ENCODE measurements at regions of chr1 and their contacts with region 1.

Region 1: GRCh38 chr1:167059045-167059808 is 30.9 kb downstream of the GPA33 start:
- DNase-seq: peak; percentile 85
- ATAC-seq: peak; percentile 55
- H3K4me3 Mint-ChIP-seq: no peak overlapping the region
- H3K27ac Mint-ChIP-seq: peak overlapping the region; percentile 61
- H3K4me1 Mint-ChIP-seq: peaks cover 7% of the 10 kb centered on the region
- H3K27me3 Mint-ChIP-seq: no peaks in the 10 kb centered on the region

Region 2: GRCh38 chr1:165928075-165928731 is 1131.0 kb before region 1 on chr1:
- CTCF ChIA-PET with region 1: no interaction called
- POLR2A ChIA-PET with region 1: no interaction called
- intact Hi-C with region 1: loop called in 1 of 2 experiments (anchors 2 kb)
- DNase-seq: peak; percentile 73
- ATAC-seq: peak; percentile 84
- H3K4me3 Mint-ChIP-seq: no peak overlapping the region
- H3K27ac Mint-ChIP-seq: no peak overlapping the region
- H3K4me1 Mint-ChIP-seq: no peaks in the 10 kb centered on the region
- H3K27me3 Mint-ChIP-seq: peaks cover 8% of the 10 kb centered on the region

Region 3: DNA sequence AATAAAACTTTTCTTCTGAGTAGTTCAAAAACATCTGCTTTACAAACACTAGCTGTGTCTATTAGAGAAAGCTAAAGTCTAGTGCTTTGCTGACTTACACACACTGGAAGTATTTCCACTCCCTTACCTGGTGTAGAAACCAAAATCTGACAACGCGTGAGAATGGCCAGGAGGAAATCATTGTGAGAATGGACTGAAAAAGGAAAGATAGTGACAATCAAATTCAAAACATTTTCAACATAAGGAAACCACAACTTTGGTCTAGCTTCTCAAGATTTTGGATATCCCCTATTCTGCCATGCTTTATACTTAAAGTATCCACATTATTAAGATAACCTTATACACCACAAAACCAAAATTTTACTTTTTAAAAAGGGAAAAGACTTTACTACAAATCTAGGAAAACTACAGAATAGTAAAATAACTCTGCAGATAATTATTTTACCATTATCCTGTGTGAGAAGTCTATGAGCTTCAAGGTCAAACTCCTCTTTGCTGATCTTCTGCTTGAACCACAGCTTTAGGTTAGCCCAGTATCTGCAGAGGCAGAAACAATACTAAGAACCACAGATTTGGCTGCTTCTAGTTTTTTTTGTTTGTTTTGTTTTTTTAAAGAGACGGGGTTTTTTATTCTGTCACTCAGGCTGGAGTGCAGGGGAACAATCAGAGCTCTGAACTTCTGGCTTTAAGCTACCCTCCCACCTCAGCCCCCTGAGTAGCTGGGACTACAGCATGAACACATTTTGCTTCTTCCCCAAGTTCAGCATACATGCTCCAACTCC is 189.7 kb before region 1 on chr1:
- CTCF ChIA-PET with region 1: interaction called, 42 read pairs
- POLR2A ChIA-PET with region 1: no interaction called
- intact Hi-C with region 1: no loop called
- DNase-seq: no peak
- ATAC-seq: peak; percentile 44
- H3K4me3 Mint-ChIP-seq: no peak overlapping the region
- H3K27ac Mint-ChIP-seq: peak overlapping the region; percentile 70
- H3K4me1 Mint-ChIP-seq: peaks cover 48% of the 10 kb centered on the region
- H3K27me3 Mint-ChIP-seq: no peaks in the 10 kb centered on the region

Region 4: DNA sequence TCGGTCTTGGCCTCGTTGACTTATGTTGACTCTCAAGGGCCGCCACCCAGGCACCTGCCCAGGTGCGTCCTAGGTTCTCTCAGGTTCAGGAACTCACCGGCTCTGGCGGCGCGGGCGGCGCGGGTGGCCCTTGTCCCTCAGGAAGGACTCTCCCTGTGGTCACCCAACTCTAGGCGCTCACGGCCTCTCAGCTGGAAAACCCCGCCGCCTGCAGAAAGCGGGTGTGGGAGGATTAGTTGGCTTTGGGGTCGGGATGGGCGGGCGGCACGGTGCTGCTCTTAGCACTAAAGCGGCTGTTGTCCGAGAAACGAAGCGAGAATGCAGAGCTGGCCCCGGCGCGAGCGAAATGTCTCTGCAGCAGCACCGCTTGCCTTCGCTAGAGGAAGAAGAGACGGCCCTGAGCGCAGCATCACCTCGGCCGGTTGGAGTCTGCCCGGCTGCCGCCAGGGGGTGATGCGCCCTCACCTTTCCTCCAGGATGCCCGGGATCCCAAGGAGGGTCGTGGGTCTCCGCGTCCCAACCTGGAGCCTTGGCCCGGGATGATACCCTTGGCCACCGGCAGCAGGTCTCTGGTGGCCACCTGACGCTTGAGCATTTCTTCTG is 175.1 kb before region 1 on chr1:
- CTCF ChIA-PET with region 1: interaction called, 42 read pairs
- POLR2A ChIA-PET with region 1: no interaction called
- intact Hi-C with region 1: loop called in 1 of 2 experiments (anchors 1 kb)
- DNase-seq: peak; percentile 72
- ATAC-seq: peak; percentile 89
- H3K4me3 Mint-ChIP-seq: no peak overlapping the region
- H3K27ac Mint-ChIP-seq: no peak overlapping the region
- H3K4me1 Mint-ChIP-seq: peaks cover 18% of the 10 kb centered on the region
- H3K27me3 Mint-ChIP-seq: peaks cover 16% of the 10 kb centered on the region

Region 5: DNA sequence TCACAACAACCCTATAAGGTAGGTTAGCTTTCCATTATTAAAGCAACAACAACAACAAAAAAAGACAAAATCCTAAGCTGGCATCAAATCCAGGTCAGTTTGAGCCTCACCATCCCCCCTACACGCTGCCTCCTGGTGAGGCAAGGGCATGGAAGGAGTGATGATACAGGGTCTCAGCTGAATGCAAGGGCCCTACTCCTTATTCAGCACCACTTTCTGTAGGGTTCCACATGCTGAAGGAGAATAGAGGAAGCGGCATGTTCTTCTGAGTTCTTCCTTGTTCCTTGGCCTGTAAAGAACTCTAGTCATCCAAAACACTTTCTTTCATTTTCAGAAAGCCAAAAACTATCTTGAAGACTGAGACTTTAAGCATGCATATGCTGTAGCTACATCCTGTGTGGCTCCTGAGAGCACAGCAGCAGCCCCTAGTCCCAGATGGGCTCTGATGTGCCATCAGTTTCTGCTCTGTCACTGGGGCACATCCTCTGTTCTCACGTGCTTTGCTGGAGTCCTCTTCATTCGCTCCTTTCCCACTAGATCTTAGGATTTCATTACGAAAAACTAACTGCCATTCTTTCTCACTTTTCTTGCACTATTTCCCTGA is 90.1 kb before region 1 on chr1:
- CTCF ChIA-PET with region 1: interaction called, 15 read pairs
- POLR2A ChIA-PET with region 1: no interaction called
- intact Hi-C with region 1: loop called (anchors 2 to 5 kb)
- DNase-seq: peak; percentile 38
- ATAC-seq: peak; percentile 59
- H3K4me3 Mint-ChIP-seq: no peak overlapping the region
- H3K27ac Mint-ChIP-seq: peak overlapping the region; percentile 49
- H3K4me1 Mint-ChIP-seq: peaks cover 45% of the 10 kb centered on the region
- H3K27me3 Mint-ChIP-seq: peaks cover 26% of the 10 kb centered on the region

Region 6: GRCh38 chr1:166999090-166999489 is 60.1 kb before region 1 on chr1:
- CTCF ChIA-PET with region 1: interaction called, 10 read pairs
- POLR2A ChIA-PET with region 1: no interaction called
- intact Hi-C with region 1: no loop called
- DNase-seq: no peak
- ATAC-seq: peak; percentile 39
- H3K4me3 Mint-ChIP-seq: no peak overlapping the region
- H3K27ac Mint-ChIP-seq: no peak overlapping the region
- H3K4me1 Mint-ChIP-seq: peaks cover 8% of the 10 kb centered on the region
- H3K27me3 Mint-ChIP-seq: peaks cover 3% of the 10 kb centered on the region

Region 7: DNA sequence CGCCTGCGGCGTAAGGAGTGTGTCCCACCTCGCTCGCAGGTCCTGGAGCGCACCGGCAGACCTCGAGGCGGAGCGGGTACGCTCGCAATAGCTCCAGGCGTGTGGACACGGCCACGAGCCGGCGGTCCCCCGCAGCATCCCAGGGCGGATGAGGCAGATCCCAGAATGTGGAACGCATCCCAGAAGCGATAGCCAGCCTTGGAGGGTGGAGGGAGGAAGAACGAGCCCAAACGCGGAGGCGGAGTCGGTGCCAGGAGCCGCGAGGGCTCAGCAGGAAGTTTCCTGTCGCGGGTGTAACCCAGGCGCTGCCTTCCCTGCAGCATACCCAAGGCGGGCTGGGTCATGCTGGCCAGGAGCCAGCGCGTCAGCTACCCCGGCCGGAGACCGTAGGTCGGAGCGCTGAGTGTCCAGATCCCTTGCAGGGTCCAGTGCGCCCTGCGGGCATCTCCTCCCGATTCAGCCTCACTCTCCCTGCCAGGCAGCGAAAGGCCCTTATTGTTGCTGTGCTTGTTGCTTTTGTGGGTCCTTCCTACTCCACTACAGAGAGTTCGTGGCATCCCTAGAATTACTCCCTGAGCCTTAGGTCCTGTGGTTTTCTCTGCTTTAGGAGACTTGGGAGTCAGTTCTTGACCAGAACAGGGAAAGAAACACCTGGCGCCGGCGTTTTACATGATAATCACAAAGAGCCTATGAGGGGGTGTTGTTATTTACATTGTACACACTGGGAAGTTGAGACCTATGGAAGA is 62.3 kb after region 1 on chr1:
- CTCF ChIA-PET with region 1: interaction called, 10 read pairs
- POLR2A ChIA-PET with region 1: no interaction called
- intact Hi-C with region 1: no loop called
- DNase-seq: peak; percentile 56
- ATAC-seq: peak; percentile 64
- H3K4me3 Mint-ChIP-seq: peak overlapping the region; percentile 65
- H3K27ac Mint-ChIP-seq: peak overlapping the region; percentile 66
- H3K4me1 Mint-ChIP-seq: no peaks in the 10 kb centered on the region
- H3K27me3 Mint-ChIP-seq: no peaks in the 10 kb centered on the region

Region 8: DNA sequence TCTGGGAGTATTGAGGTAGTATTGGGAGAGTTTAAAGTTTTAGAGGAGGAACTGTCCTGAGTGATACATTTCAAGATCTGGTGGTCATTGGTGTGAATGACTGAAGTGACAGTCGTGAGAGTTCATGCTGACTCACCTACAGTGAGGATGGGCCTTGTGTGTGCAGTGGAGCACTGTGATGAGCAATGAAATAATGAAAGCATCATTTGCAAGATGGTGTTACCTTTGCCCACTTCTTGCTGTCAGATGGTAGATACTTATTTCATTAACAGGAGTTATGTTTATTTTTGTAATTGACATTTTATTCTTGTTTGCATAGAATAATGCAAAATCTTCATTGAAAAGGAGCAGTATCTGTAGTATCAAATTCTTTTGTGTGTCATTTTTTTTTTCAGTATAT is 190.5 kb after region 1 on chr1:
- CTCF ChIA-PET with region 1: no interaction called
- POLR2A ChIA-PET with region 1: no interaction called
- intact Hi-C with region 1: no loop called
- DNase-seq: peak; percentile 25
- ATAC-seq: peak; percentile 94
- H3K4me3 Mint-ChIP-seq: no peak overlapping the region
- H3K27ac Mint-ChIP-seq: no peak overlapping the region
- H3K4me1 Mint-ChIP-seq: peaks cover 49% of the 10 kb centered on the region
- H3K27me3 Mint-ChIP-seq: no peaks in the 10 kb centered on the region